ENCODE measurements at regions of chr11 and their contacts with region 1.

Region 1: DNA sequence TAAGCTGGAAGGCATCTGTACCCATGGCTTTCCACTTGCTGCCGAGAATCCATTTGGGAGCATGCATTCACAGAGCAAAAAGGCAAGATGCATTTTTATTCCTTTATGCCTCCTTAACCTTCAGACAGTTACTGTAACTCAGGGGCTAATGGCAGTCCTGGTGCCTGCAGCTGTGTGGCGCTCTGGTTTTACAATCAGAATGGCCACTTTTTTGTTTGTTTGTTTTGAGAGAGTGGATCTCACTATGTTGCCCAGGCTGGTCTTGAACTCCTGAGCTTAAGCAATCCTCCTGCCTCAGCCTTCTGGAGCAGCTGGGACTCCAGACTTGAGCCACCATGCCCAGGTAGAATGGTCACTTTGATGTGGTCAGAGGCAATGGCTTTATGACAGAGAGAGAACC is 101.8 kb downstream of the NAV2 start:
- DNase-seq: no peak
- ATAC-seq: peak in 1 of 4 donors; percentile 15
- H3K4me3 ChIP-seq: peak overlapping the region; percentile 39
- H3K27ac ChIP-seq: peak overlapping the region; percentile 68
- H3K4me1 ChIP-seq: peaks cover 60% of the 10 kb centered on the region
- H3K27me3 ChIP-seq: no peaks in the 10 kb centered on the region
- CTCF ChIP-seq: no peak

Region 2: DNA sequence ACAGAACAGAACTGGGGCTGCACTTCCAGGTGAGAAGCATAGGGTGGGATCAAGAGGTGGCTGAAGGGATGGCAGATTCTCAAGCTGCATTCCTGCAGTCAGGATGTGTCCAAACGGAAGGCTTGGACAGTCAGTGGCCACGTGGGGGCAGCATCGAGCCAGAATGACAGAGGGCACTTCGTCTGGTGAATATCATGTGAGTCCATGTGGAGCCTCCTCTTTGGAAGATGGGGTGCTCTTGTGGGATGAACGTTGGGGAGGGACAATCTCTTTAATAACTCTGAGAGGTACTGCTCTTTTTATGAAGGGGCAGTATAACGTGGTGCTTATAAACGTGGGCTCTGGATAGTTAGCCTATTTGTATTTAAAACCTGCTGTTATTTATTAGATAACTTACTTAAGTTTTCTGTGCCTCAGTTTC is 256.7 kb before region 1 on chr11:
- intact Hi-C with region 1: no loop called
- DNase-seq: peak; percentile 86 to 90
- ATAC-seq: peak; percentile 72 to 87 (median 80)
- H3K4me3 ChIP-seq: no peak overlapping the region
- H3K27ac ChIP-seq: no peak overlapping the region
- H3K4me1 ChIP-seq: no peaks in the 10 kb centered on the region
- H3K27me3 ChIP-seq: no peaks in the 10 kb centered on the region
- CTCF ChIP-seq: peak; percentile 88

Region 3: DNA sequence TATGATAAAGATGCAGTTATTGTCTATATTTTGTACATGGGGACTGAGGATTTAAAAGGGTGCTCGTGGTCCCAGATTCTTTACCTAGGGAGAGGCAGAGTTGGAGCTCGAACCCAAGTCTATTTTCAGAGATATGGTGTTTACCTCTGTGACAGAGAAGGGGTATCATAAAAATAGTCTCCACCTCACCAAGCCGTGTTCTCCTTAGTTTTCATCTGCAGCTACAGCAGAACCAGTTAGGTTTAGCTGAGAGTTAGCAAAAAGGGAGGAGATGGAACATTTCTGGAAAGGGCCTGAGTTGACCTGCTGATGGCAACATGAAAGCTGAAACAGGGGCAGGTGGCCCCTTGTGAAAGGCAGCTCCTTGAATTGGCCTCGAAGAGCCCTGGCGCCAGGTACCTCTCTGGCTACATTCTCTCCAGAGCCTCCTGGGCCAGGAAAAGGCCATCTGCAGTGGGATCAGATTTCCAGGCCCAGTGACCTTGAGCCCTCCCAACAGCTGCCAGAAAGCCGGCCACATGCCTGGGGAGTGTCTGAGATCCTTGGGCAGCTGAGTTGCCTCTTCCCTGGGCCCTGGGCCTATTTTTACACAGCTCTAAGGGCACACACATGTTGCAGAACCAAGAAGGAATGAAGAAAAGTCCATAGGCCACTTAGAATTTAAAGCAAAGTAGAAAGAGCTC is 34.8 kb after region 1 on chr11:
- intact Hi-C with region 1: loop called in 1 of 2 experiments (anchors 2 kb)
- DNase-seq: peak; percentile 70 to 89
- ATAC-seq: peak; percentile 97 to 99 (median 98)
- H3K4me3 ChIP-seq: no peak overlapping the region
- H3K27ac ChIP-seq: peak overlapping the region; percentile 86
- H3K4me1 ChIP-seq: peaks cover 29% of the 10 kb centered on the region
- H3K27me3 ChIP-seq: no peaks in the 10 kb centered on the region
- CTCF ChIP-seq: no peak

Region 4: GRCh38 chr11:19903620-19904069 is 89.2 kb after region 1 on chr11:
- intact Hi-C with region 1: loop called in 1 of 2 experiments (anchors 5 kb)
- DNase-seq: peak; percentile 50 to 72
- ATAC-seq: peak; percentile 82 to 94 (median 84)
- H3K4me3 ChIP-seq: no peak overlapping the region
- H3K27ac ChIP-seq: no peak overlapping the region
- H3K4me1 ChIP-seq: no peaks in the 10 kb centered on the region
- H3K27me3 ChIP-seq: no peaks in the 10 kb centered on the region
- CTCF ChIP-seq: peak; percentile 87

Measured in psoas muscle (tissue), 8 donors.